Transverse colon (tissue), 4 donors: ENCODE measurements at regions of chr19 and their contacts with region 1.

Region 1: DNA sequence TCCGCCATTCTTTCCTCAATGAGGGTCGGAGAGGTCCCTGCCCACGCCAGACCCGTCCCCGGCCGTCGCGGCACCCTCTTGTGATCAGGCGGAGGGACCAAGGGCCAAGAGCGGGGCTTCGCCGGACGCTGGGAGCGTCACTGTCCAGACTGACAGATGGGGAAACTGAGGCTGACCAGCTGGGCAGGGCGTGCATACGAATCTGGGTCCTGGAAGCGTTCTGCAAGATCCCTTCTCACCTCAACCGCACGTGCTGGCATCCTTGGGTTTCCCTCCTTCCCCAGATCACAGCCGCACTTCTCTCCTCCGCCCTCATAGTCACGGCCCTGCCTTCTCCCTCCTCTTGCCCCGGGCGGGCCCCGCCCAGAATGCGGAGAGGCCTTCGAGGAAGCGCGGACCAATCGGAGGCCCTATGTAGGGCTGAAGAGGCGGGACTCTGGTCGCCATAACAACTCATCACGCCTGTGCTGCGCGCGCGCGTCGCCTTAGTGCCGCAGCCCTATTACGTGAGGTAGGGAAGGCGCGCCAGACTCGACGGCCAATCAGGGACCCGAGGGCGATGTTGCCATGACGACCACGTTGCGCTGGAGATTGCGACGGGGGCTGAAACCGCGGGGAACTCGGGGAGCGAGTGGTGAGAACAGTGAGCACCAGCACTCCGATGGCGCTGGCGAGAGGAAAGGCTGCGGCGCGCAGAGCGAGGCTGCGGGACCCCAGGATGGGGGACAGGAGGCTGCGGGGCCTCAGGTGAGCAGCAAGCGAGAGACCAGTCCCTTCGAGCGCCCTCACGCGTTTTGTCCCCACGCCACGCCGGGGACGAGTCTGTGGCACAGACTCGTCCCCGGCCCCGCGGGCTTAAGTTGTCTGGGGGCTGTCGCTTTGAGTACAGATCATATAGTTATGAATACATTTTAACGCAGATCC is 5.7 kb downstream of the RNF225 start:
- DNase-seq: peak; percentile 99
- H3K4me3 ChIP-seq: peak overlapping the region; percentile 32 to 94 (median 68)
- H3K27ac ChIP-seq: peak overlapping the region; percentile 82 to 92 (median 85)
- H3K4me1 ChIP-seq: peaks cover 6 to 22% (median 18%) of the 10 kb centered on the region in 4 donors
- H3K27me3 ChIP-seq: peaks cover 20% of the 10 kb centered on the region
- CTCF ChIP-seq: peak in 1 of 5 experiments; percentile 2
- EP300 ChIP-seq: no peak
- POLR2A ChIP-seq: peak; percentile 82

Region 2: DNA sequence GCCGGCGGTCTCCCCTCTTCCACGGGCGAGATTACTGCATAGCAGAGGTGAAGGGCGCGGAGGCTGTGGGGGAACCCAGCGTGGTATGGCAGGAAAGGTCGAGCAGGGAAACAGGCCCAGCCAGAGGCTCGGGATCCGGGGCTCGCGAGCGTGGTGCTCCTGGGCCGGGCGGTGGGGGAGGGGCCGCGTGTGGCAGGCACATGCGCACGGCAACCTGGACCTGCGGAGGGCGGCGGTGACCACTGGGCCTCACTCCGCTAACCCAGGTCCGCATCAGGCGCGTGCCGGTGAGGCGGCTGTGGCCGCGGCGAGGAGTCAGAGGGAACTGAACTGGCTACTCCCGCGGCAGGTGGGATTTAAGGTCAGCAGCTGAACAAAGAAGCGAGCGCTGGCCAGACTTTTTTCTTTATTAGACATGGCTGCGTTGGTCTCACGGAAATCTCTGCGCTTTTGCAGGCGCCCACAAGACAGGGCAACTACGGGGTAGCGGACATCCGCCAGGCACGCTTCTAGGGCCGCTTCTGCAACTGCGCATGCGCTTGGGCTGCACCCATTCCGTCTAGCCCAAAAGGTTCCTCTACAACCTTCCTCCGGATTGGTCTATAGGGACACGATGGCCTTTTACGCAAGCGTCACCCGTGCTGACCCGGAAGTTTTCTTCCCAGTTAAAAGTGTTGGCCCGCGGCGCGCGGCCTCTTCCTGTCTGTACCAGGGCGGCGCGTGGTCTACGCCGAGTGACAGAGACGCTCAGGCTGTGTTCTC is 14.4 kb before region 1 on chr19 and contains the start of gene RPS5:
- in situ Hi-C with region 1: no loop called
- intact Hi-C with region 1: loop called (anchors 2 kb)
- DNase-seq: peak; percentile 96
- H3K4me3 ChIP-seq: peak within 1 kb of the TSS; percentile 46 to 80 (median 68)
- H3K27ac ChIP-seq: peak within 1 kb of the TSS; percentile 99
- H3K4me1 ChIP-seq: peaks cover 17 to 42% (median 25%) of the 10 kb centered on the region in 4 donors
- H3K27me3 ChIP-seq: no peaks in the 10 kb centered on the region
- CTCF ChIP-seq: peak in 1 of 5 experiments; percentile 27
- EP300 ChIP-seq: no peak
- POLR2A ChIP-seq: peak; percentile 81
- total RNA-seq, gene RPS5: 513 to 1,129 (median 743) TPM